Activated naive CD4-positive, alpha-beta T cell treated with anti-CD3 and anti-CD28 coated beads for 36 hours (primary cell): ENCODE measurements at regions of chr3 and their contacts with region 1.

Region 1: GRCh38 chr3:9649791-9650521 is 651 bp downstream of the MTMR14 start:
- DNase-seq: no peak
- H3K4me3 Mint-ChIP-seq: peak overlapping the region; percentile 94
- H3K27ac Mint-ChIP-seq: peak overlapping the region; percentile 86
- H3K4me1 Mint-ChIP-seq: peaks cover 32% of the 10 kb centered on the region
- H3K27me3 Mint-ChIP-seq: no peaks in the 10 kb centered on the region

Region 2: GRCh38 chr3:8963137-8963869 is 686.7 kb before region 1 on chr3 and contains the start of gene RAD18:
- CTCF ChIA-PET with region 1: no interaction called
- intact Hi-C with region 1: loop called (anchors 5 kb)
- DNase-seq: peak; percentile 95
- H3K4me3 Mint-ChIP-seq: peak within 1 kb of the TSS; percentile 97
- H3K27ac Mint-ChIP-seq: peak within 1 kb of the TSS; percentile 94
- H3K4me1 Mint-ChIP-seq: peaks cover 35% of the 10 kb centered on the region
- H3K27me3 Mint-ChIP-seq: no peaks in the 10 kb centered on the region
- total RNA-seq, gene RAD18: 44.5 to 45.4 TPM

Region 3: DNA sequence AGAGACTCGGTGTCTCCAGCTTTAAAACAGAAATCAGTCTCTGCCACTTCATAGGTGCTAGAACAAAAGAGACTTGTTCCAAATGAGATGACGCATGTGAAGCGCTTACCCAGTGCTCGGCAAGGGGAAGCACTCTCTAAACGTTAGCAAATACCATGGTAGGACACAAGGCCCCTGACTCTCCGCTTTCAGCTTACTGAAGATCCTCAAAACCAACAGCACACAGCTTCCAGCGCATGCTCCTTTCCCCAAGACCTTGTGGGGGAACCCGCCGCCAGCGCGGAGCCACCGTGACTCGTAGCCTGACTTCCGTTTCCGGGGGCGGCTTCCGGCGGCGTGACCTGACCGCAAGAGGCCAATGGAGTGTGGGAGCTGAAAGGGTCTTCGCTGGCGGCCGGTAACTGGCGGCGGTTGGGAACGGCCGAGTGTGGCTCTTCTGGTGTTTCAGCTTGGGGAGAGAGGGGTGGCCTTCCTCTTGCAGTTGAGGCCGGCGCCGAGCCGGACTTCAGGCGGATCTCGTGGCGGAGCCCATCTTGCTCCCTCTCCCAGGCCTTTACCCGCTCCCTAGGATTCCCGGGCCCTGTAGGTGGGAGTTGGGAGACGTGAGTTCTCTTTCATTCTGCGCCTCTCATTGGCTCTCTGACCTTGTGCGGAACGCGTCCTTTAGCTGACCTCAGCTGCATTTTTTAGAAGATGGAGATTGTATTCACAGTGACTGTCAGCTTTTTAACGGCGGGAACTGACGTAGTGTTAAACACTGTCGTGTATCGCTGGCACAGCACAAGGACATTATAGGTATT is 287.0 kb before region 1 on chr3 and contains the start of gene THUMPD3:
- CTCF ChIA-PET with region 1: no interaction called
- intact Hi-C with region 1: loop called (anchors 1 kb)
- DNase-seq: peak; percentile 95
- H3K4me3 Mint-ChIP-seq: peak within 1 kb of the TSS; percentile 98
- H3K27ac Mint-ChIP-seq: peak within 1 kb of the TSS; percentile 99
- H3K4me1 Mint-ChIP-seq: peaks cover 26% of the 10 kb centered on the region
- H3K27me3 Mint-ChIP-seq: no peaks in the 10 kb centered on the region
- total RNA-seq, gene THUMPD3: 46.0 to 48.9 TPM

Region 4: DNA sequence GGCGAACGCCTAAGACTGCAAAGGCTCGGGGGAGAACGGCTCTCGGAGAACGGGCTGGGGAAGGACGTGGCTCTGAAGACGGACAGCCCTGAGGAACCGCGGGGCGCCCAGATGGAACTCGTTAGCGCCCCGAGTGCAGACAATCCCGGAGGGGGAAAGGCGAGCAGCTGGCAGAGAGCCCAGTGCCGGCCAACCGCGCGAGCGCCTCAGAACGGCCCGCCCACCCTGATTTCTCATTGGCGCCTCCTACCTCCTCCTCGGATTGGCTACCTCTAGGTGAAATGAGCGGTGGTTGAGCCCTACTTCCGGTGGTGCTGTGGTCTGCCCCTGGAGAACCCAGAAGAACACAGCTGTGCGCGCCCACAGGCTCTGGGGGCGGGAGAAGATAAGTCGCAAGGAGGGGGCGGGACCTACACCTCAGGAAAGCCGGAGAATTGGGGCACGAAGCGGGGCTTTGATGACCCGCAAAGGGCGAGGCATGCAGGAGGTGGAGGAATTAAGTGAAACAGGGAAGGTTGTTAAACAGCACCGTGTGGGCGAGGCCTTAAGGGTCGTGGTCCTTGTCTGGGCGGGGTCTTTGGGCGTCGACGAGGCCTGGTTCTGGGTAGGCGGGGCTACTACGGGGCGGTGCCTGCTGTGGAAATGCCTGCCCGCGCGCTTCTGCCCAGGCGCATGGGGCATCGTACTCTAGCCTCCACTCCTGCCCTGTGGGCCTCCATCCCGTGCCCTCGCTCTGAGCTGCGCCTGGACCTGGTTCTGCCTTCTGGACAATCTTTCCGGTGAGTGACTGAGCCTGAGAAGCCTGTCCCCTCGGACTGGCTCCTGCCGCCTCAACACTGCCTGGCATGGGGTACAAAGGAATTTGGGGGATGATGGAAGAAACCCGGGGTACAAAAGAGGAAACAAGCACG is 99.9 kb after region 1 on chr3 and contains the start of gene OGG1:
- CTCF ChIA-PET with region 1: no interaction called
- intact Hi-C with region 1: loop called (anchors 1 kb)
- DNase-seq: peak; percentile 98
- H3K4me3 Mint-ChIP-seq: peak within 1 kb of the TSS; percentile 97
- H3K27ac Mint-ChIP-seq: peak within 1 kb of the TSS; percentile 94
- H3K4me1 Mint-ChIP-seq: peaks cover 50% of the 10 kb centered on the region
- H3K27me3 Mint-ChIP-seq: no peaks in the 10 kb centered on the region
- total RNA-seq, gene OGG1: 26.1 to 28.5 TPM

Region 5: GRCh38 chr3:10010486-10011465 is 360.8 kb after region 1 on chr3:
- CTCF ChIA-PET with region 1: no interaction called
- intact Hi-C with region 1: loop called (anchors 5 kb)
- DNase-seq: peak; percentile 85
- H3K4me3 Mint-ChIP-seq: peak overlapping the region; percentile 12
- H3K27ac Mint-ChIP-seq: no peak overlapping the region
- H3K4me1 Mint-ChIP-seq: peaks cover 13% of the 10 kb centered on the region
- H3K27me3 Mint-ChIP-seq: peaks cover 6% of the 10 kb centered on the region